Sigmoid colon (tissue), 7 donors: ENCODE measurements at regions of chr4 and their contacts with region 1.

Region 1: DNA sequence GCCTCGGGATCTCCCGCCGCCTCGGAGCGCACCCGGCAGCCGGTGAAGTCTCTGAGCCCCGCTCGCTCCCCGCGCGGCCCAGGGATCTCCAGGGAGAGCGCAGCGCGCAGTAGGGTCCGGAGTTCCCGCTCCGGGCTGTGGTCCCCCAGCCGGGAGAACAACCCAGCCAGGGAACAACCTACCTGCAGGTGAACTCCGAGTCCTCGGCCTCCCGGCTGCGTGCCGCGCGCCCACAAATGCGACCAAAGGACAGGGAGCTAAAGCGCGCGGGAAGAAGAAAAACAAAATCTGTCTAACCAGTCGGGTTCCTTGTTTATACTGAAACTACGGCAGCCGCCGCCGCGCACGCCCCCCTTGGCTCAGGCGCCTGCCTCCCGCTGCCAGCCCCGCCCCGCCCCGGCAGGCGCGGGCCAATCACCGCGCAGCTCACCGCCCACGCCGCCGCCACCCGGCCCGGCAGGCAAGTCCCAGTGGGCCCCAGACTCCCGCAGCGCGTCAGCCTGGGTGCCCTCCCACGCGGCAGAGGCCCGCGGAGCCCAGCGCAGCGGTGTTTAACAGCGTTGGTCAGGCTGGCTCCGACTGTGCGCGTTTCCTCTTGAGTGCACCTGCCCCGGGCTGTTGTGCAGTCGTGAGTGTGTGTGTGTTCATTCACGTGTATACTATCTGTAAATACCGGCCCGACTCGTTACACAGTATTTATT is at the start of gene RASGEF1B:
- DNase-seq: peak; percentile 93
- H3K4me3 ChIP-seq: peak within 1 kb of the TSS; percentile 65 to 85 (median 80)
- H3K27ac ChIP-seq: peak within 1 kb of the TSS; percentile 84 to 90 (median 88)
- H3K4me1 ChIP-seq: peaks cover 0 to 35% (median 27%) of the 10 kb centered on the region in 4 donors
- H3K27me3 ChIP-seq: no peaks in the 10 kb centered on the region
- CTCF ChIP-seq: no peak
- EP300 ChIP-seq: no peak
- POLR2A ChIP-seq: peak; percentile 28 to 43
- total RNA-seq, gene RASGEF1B: 5.0 to 12.1 (median 10.8) TPM

Region 2: DNA sequence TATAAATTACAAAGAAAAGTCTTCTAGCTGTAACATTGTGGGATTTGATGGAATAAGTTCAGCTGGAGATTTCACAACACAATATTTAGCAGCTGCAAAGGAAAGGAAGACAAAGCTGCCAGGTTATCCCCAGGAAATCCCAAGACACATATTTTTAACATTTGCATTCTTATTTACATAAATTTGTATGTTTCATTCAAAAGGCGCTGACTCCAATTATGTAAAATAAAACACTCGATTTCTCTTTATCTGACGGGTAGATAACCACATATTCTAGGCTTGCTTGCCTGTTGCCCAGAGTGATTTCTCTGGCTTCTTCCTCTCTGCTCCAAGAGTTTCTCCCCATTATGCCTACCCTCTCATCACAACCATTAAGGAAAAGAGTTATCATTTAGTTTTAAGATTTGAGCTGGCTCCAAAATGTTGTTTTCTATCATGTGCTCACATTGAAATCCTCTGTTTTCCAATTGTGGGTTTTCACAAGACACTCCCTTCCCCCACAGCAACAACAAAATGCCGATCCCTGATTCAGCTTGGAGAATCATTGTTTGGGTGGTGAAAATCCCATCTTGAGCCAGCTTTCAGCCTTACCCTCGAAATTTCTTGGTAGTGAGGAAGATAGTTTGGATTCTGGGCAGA is 128.1 kb after region 1 on chr4:
- intact Hi-C with region 1: loop called (anchors 5 kb)
- DNase-seq: no peak
- H3K4me3 ChIP-seq: no peak overlapping the region
- H3K27ac ChIP-seq: peak overlapping the region; percentile 33 to 55 (median 48)
- H3K4me1 ChIP-seq: peaks cover 2 to 51% (median 27%) of the 10 kb centered on the region in 4 donors
- H3K27me3 ChIP-seq: no peaks in the 10 kb centered on the region
- CTCF ChIP-seq: no peak
- EP300 ChIP-seq: no peak
- POLR2A ChIP-seq: no peak

Region 3: GRCh38 chr4:81844717-81845116 is 373.0 kb after region 1 on chr4:
- intact Hi-C with region 1: loop called (anchors 1 kb)
- DNase-seq: peak; percentile 79
- H3K4me3 ChIP-seq: no peak overlapping the region
- H3K27ac ChIP-seq: no peak overlapping the region
- H3K4me1 ChIP-seq: no peaks in the 10 kb centered on the region
- H3K27me3 ChIP-seq: no peaks in the 10 kb centered on the region
- CTCF ChIP-seq: peak; percentile 54 to 75 (median 68)
- EP300 ChIP-seq: no peak
- POLR2A ChIP-seq: no peak

Region 4: GRCh38 chr4:82284858-82285805 is 813.4 kb after region 1 on chr4:
- intact Hi-C with region 1: loop called (anchors 5 kb)
- DNase-seq: peak; percentile 100
- H3K4me3 ChIP-seq: peak overlapping the region; percentile 24 to 50 (median 44)
- H3K27ac ChIP-seq: peak overlapping the region; percentile 63 to 76 (median 70)
- H3K4me1 ChIP-seq: peaks cover 0 to 5% (median 5%) of the 10 kb centered on the region in 4 donors
- H3K27me3 ChIP-seq: no peaks in the 10 kb centered on the region
- CTCF ChIP-seq: peak; percentile 65 to 98 (median 81)
- EP300 ChIP-seq: no peak
- POLR2A ChIP-seq: no peak

Region 5: DNA sequence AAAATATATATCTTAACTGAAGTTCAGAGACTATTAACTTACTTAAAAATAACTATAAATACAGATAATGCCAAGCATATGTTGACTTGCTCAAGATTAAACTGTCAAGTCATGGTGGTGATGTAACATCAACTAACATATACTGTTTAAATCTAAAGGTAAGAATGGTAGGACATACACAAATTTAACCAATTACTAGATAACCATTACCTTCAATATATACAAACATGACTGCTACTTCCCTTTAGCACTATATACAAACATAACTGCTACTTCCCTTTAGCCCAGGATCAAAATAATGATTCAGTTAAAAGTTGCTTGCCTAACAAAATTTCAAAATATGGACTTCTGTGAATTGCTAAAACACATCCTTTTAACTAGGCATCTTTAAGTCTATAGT is 887.1 kb after region 1 on chr4:
- intact Hi-C with region 1: loop called (anchors 5 kb)
- DNase-seq: no peak
- H3K4me3 ChIP-seq: no peak overlapping the region
- H3K27ac ChIP-seq: peak overlapping the region; percentile 38 to 72 (median 56)
- H3K4me1 ChIP-seq: peaks cover 0 to 65% (median 59%) of the 10 kb centered on the region in 4 donors
- H3K27me3 ChIP-seq: no peaks in the 10 kb centered on the region
- CTCF ChIP-seq: no peak
- EP300 ChIP-seq: no peak
- POLR2A ChIP-seq: no peak